Activated T-helper 2 cell treated with anti-CD3 and anti-CD28 coated beads, Interferon-gamma antibody, Interleukin-2, Interleukin-4, amounts not matched to agents 10 μg/mL and 5 μg/mL and 100 μg/mL, durations not matched to agents 14 hours and 24 hours and 36 hours (primary cell): ENCODE measurements at regions of chr1 and their contacts with region 1.

Region 1: DNA sequence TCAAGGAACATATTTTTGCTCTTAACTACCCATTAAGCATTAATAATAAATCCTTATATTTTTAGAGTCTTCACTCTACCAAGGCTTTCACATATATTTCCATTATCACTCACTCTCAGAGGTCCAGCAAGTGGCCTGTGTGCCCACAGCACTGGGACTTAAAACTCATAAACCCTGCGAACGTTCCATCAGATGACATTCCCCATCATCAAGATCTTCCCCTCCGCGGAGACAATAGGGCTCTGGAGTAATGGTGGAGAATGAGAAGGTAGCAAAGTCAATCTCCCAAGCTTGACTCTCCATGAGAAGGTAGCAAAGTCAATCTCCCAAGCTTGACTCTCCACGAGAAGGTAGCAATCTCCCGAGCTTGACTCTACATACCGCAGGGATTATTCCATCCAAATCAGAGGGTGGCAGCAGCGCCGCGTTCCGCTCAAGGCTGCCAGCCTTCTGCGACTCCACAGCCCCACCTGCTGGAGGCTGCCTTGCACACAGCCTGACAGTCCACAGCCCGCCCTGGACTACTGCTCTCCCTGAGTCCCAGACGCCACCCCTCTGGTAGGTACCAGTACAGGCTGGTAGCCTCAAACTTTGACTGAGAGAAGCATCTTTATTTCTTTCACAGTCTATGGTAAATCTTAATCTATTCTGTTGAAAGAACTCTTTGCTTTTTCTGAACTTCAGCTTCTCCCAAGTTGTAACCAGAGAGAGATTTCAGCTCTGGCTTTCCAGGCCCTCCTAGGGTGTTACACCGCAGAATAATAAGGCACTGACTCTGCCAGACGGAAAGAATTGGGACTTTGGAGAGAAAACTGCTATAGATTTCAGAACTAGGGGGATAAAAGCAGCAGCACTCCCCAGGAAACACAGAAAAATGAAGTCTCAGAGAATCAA is 26.4 kb upstream of the CTTNBP2NL start:
- DNase-seq: peak; percentile 73
- H3K4me3 Mint-ChIP-seq: no peak overlapping the region
- H3K27ac Mint-ChIP-seq: no peak overlapping the region
- H3K4me1 Mint-ChIP-seq: peaks cover 4% of the 10 kb centered on the region
- H3K27me3 Mint-ChIP-seq: peaks cover 51% of the 10 kb centered on the region

Region 2: GRCh38 chr1:112298558-112298957 is 71.1 kb before region 1 on chr1:
- intact Hi-C with region 1: loop called (anchors 5 kb)
- DNase-seq: no peak
- H3K4me3 Mint-ChIP-seq: no peak overlapping the region
- H3K27ac Mint-ChIP-seq: no peak overlapping the region
- H3K4me1 Mint-ChIP-seq: no peaks in the 10 kb centered on the region
- H3K27me3 Mint-ChIP-seq: peaks cover 8% of the 10 kb centered on the region

Region 3: DNA sequence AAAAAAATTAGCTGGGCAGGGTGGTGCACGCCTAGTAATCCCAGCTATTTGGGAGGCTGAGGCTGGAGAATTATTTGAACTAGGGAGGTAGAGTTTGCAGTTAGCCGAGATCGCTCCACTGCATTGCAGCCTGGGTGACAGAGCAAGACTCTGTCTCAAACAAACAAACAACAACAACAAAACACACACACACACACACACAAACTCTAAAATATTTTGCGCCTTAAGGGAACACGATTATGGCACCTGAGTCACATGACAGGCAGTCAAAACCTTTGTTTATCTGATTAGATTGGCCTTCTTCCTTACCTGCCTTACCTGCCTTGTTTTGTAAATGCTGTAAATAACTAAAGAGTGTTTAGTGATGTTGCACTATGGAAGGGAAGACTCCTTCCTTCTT is 118.5 kb after region 1 on chr1:
- intact Hi-C with region 1: no loop called
- DNase-seq: no peak
- H3K4me3 Mint-ChIP-seq: no peak overlapping the region
- H3K27ac Mint-ChIP-seq: no peak overlapping the region
- H3K4me1 Mint-ChIP-seq: no peaks in the 10 kb centered on the region
- H3K27me3 Mint-ChIP-seq: peaks cover 16% of the 10 kb centered on the region